Left colon (tissue), 2 donors: ENCODE measurements at regions of chr3 and their contacts with region 1.

Region 1: DNA sequence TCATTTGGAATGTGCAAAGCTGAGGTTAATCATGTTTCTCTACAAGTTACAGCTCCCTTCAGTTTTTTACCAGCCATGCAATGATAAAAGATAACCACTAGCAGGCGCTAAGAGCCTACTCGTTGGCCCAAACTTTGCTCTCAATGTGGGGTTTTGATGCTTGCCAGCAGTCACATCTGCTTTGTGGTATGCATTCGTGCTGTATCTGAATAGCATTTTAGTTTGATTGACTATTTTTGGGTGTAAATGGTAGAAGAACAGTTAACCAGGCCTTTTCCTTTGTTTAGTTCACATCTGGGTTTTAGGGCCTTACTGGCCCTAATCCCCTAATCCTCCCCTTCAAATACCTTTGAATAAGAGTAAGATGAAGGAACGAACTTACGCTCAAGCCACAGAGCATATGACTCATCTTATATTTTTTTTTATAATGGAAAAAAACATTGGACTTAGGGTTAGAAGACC is 4.4 kb upstream of the CLDN11 start:
- DNase-seq: no peak
- ATAC-seq: peak; percentile 74

Region 2: GRCh38 chr3:170811928-170812591 is 397.8 kb after region 1 on chr3:
- intact Hi-C with region 1: loop called (anchors 5 to 10 kb)
- DNase-seq: peak; percentile 45 to 58
- ATAC-seq: peak; percentile 52